Activated CD4-positive, alpha-beta T cell treated with anti-CD3 and anti-CD28 coated beads for 36 hours (primary cell): ENCODE measurements at regions of chr2 and their contacts with region 1.

Region 1: GRCh38 chr2:42944779-42945415 is 152.5 kb upstream of the HAAO start:
- DNase-seq: no peak
- ATAC-seq: no peak
- H3K4me3 Mint-ChIP-seq: no peak overlapping the region
- H3K27ac Mint-ChIP-seq: no peak overlapping the region
- H3K4me1 Mint-ChIP-seq: peaks cover 3% of the 10 kb centered on the region
- H3K27me3 Mint-ChIP-seq: no peaks in the 10 kb centered on the region

Region 2: DNA sequence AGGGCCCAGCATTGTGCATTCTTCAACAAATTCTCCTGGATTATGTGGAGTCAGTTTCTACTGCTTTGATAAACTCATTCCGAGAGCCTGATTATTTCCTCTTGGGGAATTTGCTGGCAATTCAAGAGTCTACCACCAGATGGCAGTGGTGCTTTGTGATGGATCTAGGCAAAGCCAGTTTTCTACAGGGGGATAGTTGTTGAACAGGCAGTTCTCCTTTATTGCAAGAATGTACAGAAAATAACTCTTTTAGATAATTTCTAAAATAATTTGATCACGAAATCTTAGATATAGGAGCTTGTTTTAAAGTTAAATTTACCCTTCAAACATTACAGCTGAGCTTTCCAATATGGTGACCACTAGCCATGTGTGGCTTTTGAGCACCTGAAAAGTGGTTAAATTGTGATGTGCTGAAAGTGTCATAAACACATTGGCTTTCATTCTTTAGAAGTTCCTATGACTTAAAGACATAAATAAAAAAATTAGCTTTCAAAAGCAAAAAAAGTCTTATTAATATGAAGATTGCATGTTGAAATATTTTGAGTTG is 85.8 kb before region 1 on chr2:
- CTCF ChIA-PET with region 1: interaction called, 20 read pairs
- POLR2A ChIA-PET with region 1: no interaction called
- intact Hi-C with region 1: loop called (anchors 2 kb)
- DNase-seq: peak; percentile 86
- ATAC-seq: peak; percentile 69
- H3K4me3 Mint-ChIP-seq: no peak overlapping the region
- H3K27ac Mint-ChIP-seq: no peak overlapping the region
- H3K4me1 Mint-ChIP-seq: peaks cover 5% of the 10 kb centered on the region
- H3K27me3 Mint-ChIP-seq: no peaks in the 10 kb centered on the region

Region 3: DNA sequence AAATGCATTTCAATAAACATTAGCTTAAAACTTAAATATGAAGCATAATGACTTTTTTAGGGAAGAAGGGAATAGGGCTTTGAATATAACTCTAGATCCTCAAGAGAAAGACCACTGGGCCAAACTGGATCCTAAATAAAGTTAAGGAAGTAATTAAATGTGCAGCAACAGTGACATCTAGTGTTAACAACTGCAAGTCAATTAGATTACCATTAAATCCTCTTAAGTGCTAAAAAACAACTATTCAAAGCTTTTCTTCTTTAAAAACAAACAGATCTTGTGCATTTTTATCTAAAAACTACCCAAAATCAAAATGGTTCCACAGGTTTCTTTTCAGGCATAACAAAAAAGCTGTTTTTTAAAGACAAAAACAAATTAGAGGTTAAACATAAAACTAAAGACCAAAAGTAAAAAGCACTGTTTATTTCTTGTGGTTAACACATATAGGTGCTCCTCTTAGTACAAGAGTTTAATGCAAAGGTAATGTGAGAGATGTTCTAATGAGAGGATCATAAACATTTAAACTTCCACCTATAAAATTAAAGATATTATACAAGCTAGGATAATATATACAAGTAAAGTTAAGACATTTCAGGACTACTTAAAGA is 539.5 kb after region 1 on chr2:
- CTCF ChIA-PET with region 1: interaction called, 15 read pairs
- POLR2A ChIA-PET with region 1: no interaction called
- intact Hi-C with region 1: loop called (anchors 1 kb)
- DNase-seq: no peak
- ATAC-seq: peak; percentile 42
- H3K4me3 Mint-ChIP-seq: no peak overlapping the region
- H3K27ac Mint-ChIP-seq: no peak overlapping the region
- H3K4me1 Mint-ChIP-seq: peaks cover 2% of the 10 kb centered on the region
- H3K27me3 Mint-ChIP-seq: no peaks in the 10 kb centered on the region

Region 4: DNA sequence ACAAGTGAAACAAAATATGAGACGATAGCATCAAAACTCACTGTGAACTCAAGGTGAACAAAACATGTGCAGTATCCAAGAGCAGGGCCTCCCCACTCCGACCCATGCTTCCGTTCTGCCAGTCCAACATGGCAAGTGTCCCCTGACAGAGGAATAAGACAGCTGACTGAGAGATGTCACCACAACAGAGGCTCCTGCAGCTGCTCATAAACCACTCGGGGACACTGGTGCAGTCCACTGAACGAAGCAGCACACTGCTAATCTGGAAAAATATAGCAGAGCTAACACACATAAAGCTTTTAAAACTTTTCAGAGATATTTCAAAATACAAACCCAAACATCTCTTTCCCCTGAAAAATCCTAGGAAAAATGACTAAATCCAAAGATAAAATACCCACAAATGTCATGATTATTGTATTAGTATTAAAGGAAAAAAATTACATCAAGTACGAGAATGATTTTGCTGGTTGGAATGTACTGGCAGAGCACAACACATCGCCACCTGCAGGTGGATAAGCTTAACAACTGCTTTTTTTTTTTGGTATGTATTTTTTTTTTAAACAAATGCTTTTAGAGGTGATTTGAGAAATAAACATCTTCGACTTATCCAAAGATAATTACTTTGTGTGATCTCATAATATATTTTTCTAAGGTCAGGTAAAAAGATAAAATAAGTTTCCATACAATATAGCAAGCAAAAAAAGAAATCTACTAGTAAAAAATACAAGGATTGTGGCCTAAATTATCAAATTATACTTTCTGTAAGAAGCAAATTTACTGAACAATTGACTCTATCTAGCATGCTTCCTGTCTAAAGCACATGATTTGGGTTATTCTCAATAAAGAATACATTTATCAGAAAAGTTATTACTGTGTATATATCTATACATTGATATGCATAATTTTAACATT is 632.3 kb after region 1 on chr2:
- CTCF ChIA-PET with region 1: interaction called, 10 read pairs
- POLR2A ChIA-PET with region 1: no interaction called
- intact Hi-C with region 1: loop called in 1 of 2 experiments (anchors 1 kb)
- DNase-seq: peak; percentile 46
- ATAC-seq: peak; percentile 42
- H3K4me3 Mint-ChIP-seq: no peak overlapping the region
- H3K27ac Mint-ChIP-seq: no peak overlapping the region
- H3K4me1 Mint-ChIP-seq: peaks cover 15% of the 10 kb centered on the region
- H3K27me3 Mint-ChIP-seq: no peaks in the 10 kb centered on the region